GM12878 (cell line): ENCODE measurements at regions of chr10 and their contacts with region 1.

Region 1: DNA sequence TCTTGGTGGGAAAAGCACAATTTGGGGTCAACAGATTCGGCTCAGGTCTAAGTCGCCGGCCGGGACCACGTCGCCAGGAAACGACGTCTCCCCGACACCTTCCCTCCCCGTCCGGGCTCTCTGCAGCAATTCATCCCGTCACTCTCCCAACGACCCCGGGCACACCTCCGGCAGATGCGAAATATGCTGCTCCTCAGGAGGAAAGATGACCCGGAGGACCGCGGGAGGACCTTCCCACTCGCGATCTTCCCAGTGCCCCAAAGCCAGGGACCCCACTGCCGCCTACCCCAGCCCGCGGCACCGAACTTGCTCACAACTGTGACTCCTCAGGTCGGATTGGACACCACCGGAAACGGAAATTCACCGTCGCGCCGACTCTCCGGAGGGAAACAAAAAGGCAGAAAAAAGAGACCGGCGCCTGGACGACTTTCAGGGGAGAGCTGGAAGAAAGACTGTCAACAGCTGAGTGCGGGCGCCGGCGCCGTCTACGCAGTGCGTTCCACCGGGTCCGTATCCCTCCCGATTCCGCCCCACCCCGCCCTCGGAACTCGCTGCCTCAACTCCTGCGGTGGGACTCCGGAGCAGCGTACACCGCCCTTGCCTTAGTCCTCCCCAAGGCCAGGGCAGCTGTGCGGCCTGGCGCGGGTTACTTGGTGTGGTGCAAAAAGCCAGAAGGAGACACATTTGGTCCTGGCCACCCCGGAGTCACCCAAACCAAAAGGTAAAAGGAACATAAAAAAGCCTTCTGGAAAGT is 13.8 kb upstream of the SEC24C start:
- DNase-seq: peak; percentile 68
- ATAC-seq: peak; percentile 95
- H3K4me3 ChIP-seq: peak overlapping the region; percentile 80
- H3K27ac ChIP-seq: peak overlapping the region; percentile 67
- H3K4me1 ChIP-seq: no peaks in the 10 kb centered on the region; the same call in 1 of the 2 replicates
- H3K27me3 ChIP-seq: no peaks in the 10 kb centered on the region
- CTCF ChIP-seq: no peak
- EP300 ChIP-seq: no peak
- POLR2A ChIP-seq: peak; percentile 92
- RAD21 ChIP-seq: no peak

Region 2: GRCh38 chr10:73517271-73517877 is 213.0 kb before region 1 on chr10:
- CTCF ChIA-PET with region 1: no interaction called
- POLR2A ChIA-PET with region 1: interaction called, 12 read pairs
- RAD21 ChIA-PET with region 1: no interaction called
- SMC1A ChIA-PET with region 1: no interaction called
- in situ Hi-C with region 1: no loop called
- intact Hi-C with region 1: no loop called
- DNase-seq: no peak
- ATAC-seq: no peak
- H3K4me3 ChIP-seq: no peak overlapping the region
- H3K27ac ChIP-seq: no peak overlapping the region
- H3K4me1 ChIP-seq: no peaks in the 10 kb centered on the region
- H3K27me3 ChIP-seq: no peaks in the 10 kb centered on the region
- CTCF ChIP-seq: no peak
- EP300 ChIP-seq: no peak
- POLR2A ChIP-seq: no peak
- RAD21 ChIP-seq: no peak

Region 3: GRCh38 chr10:73759512-73760115 is 29.3 kb after region 1 on chr10:
- CTCF ChIA-PET with region 1: interaction called, 3 read pairs
- POLR2A ChIA-PET with region 1: interaction called, 10 read pairs
- RAD21 ChIA-PET with region 1: interaction called, 19 read pairs
- SMC1A ChIA-PET with region 1: interaction called, 7 read pairs
- in situ Hi-C with region 1: no loop called
- intact Hi-C with region 1: no loop called
- DNase-seq: no peak
- ATAC-seq: peak; percentile 76
- H3K4me3 ChIP-seq: no peak overlapping the region
- H3K27ac ChIP-seq: peak overlapping the region; percentile 84
- H3K4me1 ChIP-seq: peaks cover 55% of the 10 kb centered on the region
- H3K27me3 ChIP-seq: no peaks in the 10 kb centered on the region
- CTCF ChIP-seq: no peak
- EP300 ChIP-seq: no peak
- POLR2A ChIP-seq: no peak
- RAD21 ChIP-seq: no peak